Thyroid gland (tissue), 4 donors: ENCODE measurements at regions of chr1 and their contacts with region 1.

Region 1: GRCh38 chr1:86499987-86500593 is 31.4 kb downstream of the CLCA1 start:
- DNase-seq: no peak
- H3K4me3 ChIP-seq: no peak overlapping the region
- H3K27ac ChIP-seq: no peak overlapping the region
- H3K4me1 ChIP-seq: peaks cover 0 to 14% of the 10 kb centered on the region in 2 donors
- H3K27me3 ChIP-seq: no peaks in the 10 kb centered on the region
- CTCF ChIP-seq: peak; percentile 44 to 86 (median 76)
- POLR2A ChIP-seq: no peak

Region 2: GRCh38 chr1:86339014-86339812 is 160.9 kb before region 1 on chr1:
- intact Hi-C with region 1: no loop called
- DNase-seq: no peak
- H3K4me3 ChIP-seq: no peak overlapping the region
- H3K27ac ChIP-seq: no peak overlapping the region
- H3K4me1 ChIP-seq: no peaks in the 10 kb centered on the region
- H3K27me3 ChIP-seq: no peaks in the 10 kb centered on the region
- CTCF ChIP-seq: no peak
- POLR2A ChIP-seq: no peak

Region 3: DNA sequence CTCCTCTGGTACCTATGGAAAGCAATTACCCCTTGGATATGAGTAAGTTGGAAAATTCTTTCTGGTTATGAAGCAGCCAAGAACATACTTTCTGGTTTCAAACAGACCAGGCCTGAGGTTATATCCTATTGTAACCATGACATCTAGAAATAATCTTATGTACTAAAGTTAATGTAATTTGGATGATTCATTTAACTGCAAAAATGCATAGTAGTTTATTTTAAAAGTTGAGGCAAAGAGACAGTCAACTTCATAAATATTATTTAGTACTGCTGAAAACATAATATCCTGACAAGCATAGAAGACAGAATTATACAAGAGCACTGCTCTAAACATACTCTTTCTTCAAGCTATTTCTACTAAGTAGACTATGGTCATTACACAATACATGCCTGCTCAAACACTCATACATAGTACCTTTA is 129.5 kb before region 1 on chr1:
- intact Hi-C with region 1: loop called (anchors 10 kb)
- DNase-seq: no peak
- H3K4me3 ChIP-seq: no peak overlapping the region
- H3K27ac ChIP-seq: no peak overlapping the region
- H3K4me1 ChIP-seq: no peaks in the 10 kb centered on the region
- H3K27me3 ChIP-seq: no peaks in the 10 kb centered on the region
- CTCF ChIP-seq: no peak
- POLR2A ChIP-seq: no peak